ENCODE measurements at regions of chr7 and their contacts with region 1.

Region 1: GRCh38 chr7:92461027-92462003 is 14.0 kb downstream of the GATAD1 start:
- DNase-seq: peak; percentile 67
- H3K4me3 ChIP-seq: no peak overlapping the region
- H3K27ac ChIP-seq: no peak overlapping the region
- H3K4me1 ChIP-seq: no peaks in the 10 kb centered on the region
- CTCF ChIP-seq: peak; percentile 97

Region 2: DNA sequence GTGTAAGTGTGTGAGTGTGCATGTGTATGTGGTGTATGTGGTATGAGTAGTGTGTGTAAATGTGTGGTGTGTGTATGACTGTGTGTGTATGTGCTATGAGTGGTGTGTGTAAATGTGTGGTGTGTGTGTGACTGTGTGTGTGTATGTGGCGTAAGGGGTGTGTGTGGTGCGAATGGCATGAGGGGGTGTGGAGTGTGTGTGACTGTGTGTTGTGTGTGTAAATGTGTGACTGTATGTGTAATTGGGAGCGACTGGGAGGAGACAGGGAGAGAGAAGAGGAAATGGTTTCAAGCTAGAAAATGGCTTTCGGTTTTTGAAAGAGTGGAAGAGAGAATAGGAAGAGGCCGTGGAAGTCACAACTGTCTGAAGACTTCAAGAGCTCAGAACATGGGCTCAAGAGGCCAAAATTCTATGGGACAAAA is 37.6 kb before region 1 on chr7:
- CTCF ChIA-PET with region 1: interaction called, 3 read pairs
- POLR2A ChIA-PET with region 1: no interaction called
- intact Hi-C with region 1: loop called (anchors 1 kb)
- DNase-seq: no peak
- H3K4me3 ChIP-seq: no peak overlapping the region
- H3K27ac ChIP-seq: no peak overlapping the region
- H3K4me1 ChIP-seq: peaks cover 5% of the 10 kb centered on the region
- CTCF ChIP-seq: no peak

Region 3: GRCh38 chr7:92778972-92779371 is 317.7 kb after region 1 on chr7:
- CTCF ChIA-PET with region 1: no interaction called
- POLR2A ChIA-PET with region 1: no interaction called
- intact Hi-C with region 1: no loop called
- DNase-seq: peak; percentile 41
- H3K4me3 ChIP-seq: peak overlapping the region; percentile 11
- H3K27ac ChIP-seq: peak overlapping the region; percentile 44
- H3K4me1 ChIP-seq: peaks cover 26% of the 10 kb centered on the region
- CTCF ChIP-seq: peak; percentile 41; the same call in 1 of the 2 replicates

Region 4: DNA sequence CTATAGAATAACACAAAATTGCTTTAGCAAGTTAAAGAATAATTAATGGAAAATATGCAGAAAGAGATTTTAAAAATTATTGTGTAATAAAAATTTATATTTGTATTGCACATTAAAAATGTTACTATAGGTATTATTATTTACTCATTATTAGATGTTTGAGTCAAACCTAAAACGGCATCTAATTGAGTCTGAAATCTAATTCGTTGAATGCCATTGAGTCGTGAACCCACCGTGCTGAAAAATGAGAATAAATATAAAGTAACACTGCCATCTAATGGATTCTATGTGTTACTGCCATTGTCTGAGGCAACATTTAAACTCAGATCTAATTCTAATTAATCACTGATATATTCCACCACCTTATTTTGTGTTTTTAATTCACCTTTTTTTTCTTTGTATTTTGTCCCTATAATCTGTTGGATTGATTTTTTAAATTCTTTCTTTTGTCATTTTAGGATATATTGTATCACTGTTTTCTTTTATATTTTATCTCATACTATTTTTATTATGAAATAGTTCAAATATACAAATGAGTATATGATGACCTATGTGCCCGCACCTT is 594.3 kb after region 1 on chr7:
- CTCF ChIA-PET with region 1: no interaction called
- POLR2A ChIA-PET with region 1: no interaction called
- intact Hi-C with region 1: loop called (anchors 10 kb)
- DNase-seq: peak; percentile 54
- H3K4me3 ChIP-seq: no peak overlapping the region
- H3K27ac ChIP-seq: no peak overlapping the region
- H3K4me1 ChIP-seq: no peaks in the 10 kb centered on the region
- CTCF ChIP-seq: peak; percentile 92

Measured in OCI-LY7 (cell line).